Psoas muscle (tissue), 8 donors: ENCODE measurements at regions of chr3 and their contacts with region 1.

Region 1: DNA sequence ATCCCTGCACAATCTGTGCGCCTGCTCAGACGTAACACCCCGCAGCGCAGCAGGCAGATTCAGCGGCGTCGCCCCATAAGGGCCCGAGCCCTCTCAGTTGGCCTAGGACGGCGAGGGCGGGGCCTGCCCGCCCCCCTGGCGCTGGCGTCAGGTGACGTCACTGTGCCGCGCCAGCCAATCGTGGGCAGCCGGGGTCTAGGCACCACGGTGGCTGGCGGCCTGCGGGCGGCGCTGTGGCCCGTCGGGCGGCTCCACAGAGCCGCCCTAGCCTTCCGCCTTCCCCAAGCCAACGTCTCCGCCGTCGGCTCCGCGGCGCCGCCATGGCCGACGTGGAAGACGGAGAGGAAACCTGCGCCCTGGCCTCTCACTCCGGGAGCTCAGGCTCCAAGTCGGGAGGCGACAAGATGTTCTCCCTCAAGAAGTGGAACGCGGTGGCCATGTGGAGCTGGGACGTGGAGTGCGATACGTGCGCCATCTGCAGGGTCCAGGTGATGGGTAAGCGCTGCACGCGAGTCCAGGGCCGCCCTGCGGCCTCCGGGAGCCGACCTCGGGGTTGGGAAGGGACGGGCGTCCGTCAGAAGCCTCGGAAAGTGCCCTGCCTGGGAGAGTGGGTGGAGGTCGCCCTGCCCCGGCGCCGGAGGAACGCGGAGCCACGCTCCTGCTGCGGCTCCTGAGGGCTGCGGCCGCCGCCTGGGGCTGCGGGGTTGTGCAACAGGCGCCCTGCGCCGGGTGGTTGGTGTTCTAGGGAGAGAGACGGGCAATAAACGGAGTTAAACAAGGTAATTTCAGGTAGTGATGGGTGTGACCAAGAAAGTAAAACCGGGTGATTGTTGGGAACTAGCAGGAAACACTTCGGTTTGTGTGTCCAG is at the start of gene RNF7:
- DNase-seq: peak; percentile 94 to 98
- ATAC-seq: peak; percentile 97 to 98 (median 98)
- H3K4me3 ChIP-seq: peak within 1 kb of the TSS; percentile 98
- H3K27ac ChIP-seq: peak within 1 kb of the TSS; percentile 96
- H3K4me1 ChIP-seq: peaks cover 37% of the 10 kb centered on the region
- H3K27me3 ChIP-seq: no peaks in the 10 kb centered on the region
- CTCF ChIP-seq: peak; percentile 91
- total RNA-seq, gene RNF7: 95.1 to 123 (median 110) TPM

Region 2: DNA sequence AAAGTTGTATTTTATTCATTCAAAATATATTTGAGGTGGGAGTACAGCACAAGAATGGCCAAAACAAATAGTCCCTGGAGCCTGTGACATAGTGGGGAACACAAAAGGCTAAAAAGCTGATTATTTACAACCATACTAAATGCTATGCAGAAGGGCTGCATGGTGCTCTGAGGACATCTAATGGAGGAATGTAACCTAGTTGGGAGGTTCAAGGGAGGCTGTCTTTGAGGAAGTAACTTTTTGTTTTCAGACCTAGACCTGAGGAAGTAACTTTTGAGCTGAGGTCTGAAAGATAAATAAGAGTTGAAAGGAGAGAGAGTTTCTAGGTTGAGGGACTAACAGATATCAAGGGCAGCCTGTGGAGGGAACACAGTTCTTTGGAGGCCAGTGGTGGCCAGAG is 286.2 kb before region 1 on chr3:
- intact Hi-C with region 1: loop called in 1 of 2 experiments (anchors 10 kb)
- DNase-seq: no peak
- ATAC-seq: peak in 3 of 4 donors; percentile 41 to 69 (median 53)
- H3K4me3 ChIP-seq: no peak overlapping the region
- H3K27ac ChIP-seq: no peak overlapping the region
- H3K4me1 ChIP-seq: no peaks in the 10 kb centered on the region
- H3K27me3 ChIP-seq: no peaks in the 10 kb centered on the region
- CTCF ChIP-seq: peak; percentile 56

Region 3: GRCh38 chr3:141575879-141576743 is 162.1 kb before region 1 on chr3:
- intact Hi-C with region 1: loop called in 1 of 2 experiments (anchors 2 kb)
- DNase-seq: no peak
- ATAC-seq: peak in 2 of 4 donors; percentile 47 to 53
- H3K4me3 ChIP-seq: no peak overlapping the region
- H3K27ac ChIP-seq: no peak overlapping the region
- H3K4me1 ChIP-seq: no peaks in the 10 kb centered on the region
- H3K27me3 ChIP-seq: no peaks in the 10 kb centered on the region
- CTCF ChIP-seq: peak; percentile 50

Region 4: GRCh38 chr3:141795276-141795675 is 57.0 kb after region 1 on chr3:
- intact Hi-C with region 1: loop called in 1 of 2 experiments (anchors 2 kb)
- DNase-seq: no peak
- ATAC-seq: no peak
- H3K4me3 ChIP-seq: no peak overlapping the region
- H3K27ac ChIP-seq: no peak overlapping the region
- H3K4me1 ChIP-seq: peaks cover 11% of the 10 kb centered on the region
- H3K27me3 ChIP-seq: no peaks in the 10 kb centered on the region
- CTCF ChIP-seq: no peak

Region 5: DNA sequence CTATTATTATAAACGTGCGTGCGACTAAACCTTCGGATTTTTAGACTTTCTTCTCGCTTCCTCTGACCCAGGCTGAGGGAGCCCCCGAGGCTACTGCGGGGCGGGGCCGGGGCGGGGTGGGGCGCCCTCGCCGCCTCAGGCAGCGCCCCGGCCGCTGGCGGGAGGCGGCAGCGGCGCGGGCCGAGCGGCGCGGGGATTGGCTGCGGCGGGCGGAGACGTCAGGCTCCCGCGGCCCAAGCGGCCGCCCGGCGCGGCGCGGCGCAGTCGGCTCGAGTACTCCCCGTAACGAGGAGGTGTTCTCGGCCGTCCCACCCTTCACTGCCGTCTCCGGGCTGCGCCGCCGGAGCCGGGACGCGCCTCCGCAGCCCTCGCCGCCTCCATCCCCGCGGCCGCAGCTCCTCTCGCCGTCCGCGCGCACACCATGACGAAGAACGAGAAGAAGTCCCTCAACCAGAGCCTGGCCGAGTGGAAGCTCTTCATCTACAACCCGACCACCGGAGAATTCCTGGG is 138.2 kb after region 1 on chr3 and contains the start of gene ATP1B3:
- intact Hi-C with region 1: loop called (anchors 1 kb)
- DNase-seq: peak; percentile 86 to 92
- ATAC-seq: peak; percentile 90 to 93 (median 92)
- H3K4me3 ChIP-seq: peak within 1 kb of the TSS; percentile 82
- H3K27ac ChIP-seq: peak within 1 kb of the TSS; percentile 89
- H3K4me1 ChIP-seq: peaks cover 24% of the 10 kb centered on the region
- H3K27me3 ChIP-seq: no peaks in the 10 kb centered on the region
- CTCF ChIP-seq: no peak
- total RNA-seq, gene ATP1B3: 19.9 to 57.0 (median 31.6) TPM

Region 6: DNA sequence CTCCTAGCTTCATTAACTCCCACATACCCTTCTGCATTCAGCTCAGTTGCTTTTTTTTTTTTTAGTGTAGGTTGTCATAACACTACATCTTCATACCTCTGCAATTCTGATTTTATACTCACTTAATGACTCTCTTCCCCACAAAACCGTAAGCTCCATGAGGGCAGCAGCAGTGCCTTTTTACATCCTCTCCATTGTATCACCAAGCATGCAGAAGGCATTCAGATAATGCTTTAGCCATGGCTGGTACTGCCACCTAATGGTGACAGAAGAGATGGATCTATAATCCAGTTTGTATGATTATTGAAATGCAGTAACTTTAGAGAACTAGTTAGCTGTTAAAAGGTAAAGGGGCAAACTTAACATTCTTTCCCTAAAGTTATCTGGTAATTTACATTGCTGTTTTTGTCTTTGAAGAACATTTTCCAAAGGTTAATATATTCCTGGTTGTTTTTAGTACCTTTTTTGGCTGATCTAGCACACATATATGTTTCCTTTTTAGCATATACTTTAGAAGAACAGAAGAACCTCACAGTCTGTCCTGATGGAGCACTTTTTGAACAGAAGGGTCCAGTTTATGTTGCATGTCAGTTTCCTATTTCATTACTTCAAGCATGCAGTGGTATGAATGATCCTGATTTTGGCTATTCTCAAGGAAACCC is 175.0 kb after region 1 on chr3:
- intact Hi-C with region 1: loop called in 1 of 2 experiments (anchors 2 kb)
- DNase-seq: no peak
- ATAC-seq: peak; percentile 46 to 80 (median 70)
- H3K4me3 ChIP-seq: no peak overlapping the region
- H3K27ac ChIP-seq: no peak overlapping the region
- H3K4me1 ChIP-seq: no peaks in the 10 kb centered on the region
- H3K27me3 ChIP-seq: no peaks in the 10 kb centered on the region
- CTCF ChIP-seq: peak; percentile 66

Region 7: DNA sequence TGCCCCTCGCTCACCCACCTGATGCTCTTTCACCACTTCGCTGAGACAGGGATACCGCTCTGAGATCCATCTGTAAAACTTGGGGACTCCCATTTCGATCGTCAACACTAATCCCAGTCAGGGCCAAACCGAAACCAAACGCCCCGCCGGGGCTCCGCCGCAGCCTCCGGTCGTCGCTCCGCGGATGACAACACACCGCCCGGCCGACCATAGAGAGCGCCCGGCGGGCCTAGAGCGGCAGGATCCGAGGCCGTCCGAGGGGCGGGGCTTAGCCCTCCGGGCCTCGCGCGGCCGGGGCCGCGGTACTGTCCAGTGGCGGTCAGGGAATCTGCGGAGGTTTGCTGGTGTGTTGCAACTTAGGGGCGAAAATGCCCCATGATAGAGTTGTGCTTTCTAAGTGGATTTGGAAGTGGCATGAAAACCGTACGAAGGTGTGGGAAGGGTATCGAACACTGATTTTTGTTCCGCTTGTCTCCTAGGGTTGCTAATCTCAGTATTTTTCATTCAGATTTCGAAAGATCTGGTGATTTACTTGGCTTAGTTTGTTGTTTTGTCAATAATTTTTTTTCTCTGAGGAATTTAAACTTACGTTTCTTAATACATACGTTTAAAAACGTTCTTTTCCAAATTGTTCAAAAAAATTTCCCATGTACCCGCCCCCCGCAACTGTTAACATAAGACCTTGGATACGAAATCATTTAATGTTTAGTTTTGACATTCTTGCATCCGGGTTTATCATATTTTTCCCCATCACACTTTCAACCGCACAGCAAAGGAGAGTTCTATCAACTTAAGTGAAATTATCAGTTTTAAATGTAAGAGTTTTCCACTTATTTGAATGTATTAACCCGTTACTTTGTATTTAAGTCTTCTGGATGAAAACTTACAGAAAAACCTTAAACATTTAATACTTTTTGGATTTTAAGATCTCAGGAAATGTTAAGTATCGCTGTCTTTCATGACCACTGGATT is 709.9 kb after region 1 on chr3 and contains the start of gene XRN1:
- intact Hi-C with region 1: loop called in 1 of 2 experiments (anchors 10 kb)
- DNase-seq: peak; percentile 98 to 99
- ATAC-seq: peak; percentile 99 to 100 (median 100)
- H3K4me3 ChIP-seq: peak within 1 kb of the TSS; percentile 98
- H3K27ac ChIP-seq: peak within 1 kb of the TSS; percentile 98
- H3K4me1 ChIP-seq: peaks cover 28% of the 10 kb centered on the region
- H3K27me3 ChIP-seq: no peaks in the 10 kb centered on the region
- CTCF ChIP-seq: no peak
- total RNA-seq, gene XRN1: 26.7 to 46.1 (median 34.4) TPM